Caco-2 (cell line): ENCODE measurements at regions of chr11 and their contacts with region 1.

Region 1: GRCh38 chr11:123413636-123414035 is 16.4 kb upstream of the GRAMD1B start:
- DNase-seq: no peak
- H3K4me3 ChIP-seq: no peak overlapping the region
- H3K4me3 Mint-ChIP-seq: no peak overlapping the region
- H3K27ac Mint-ChIP-seq: no peak overlapping the region
- H3K4me1 ChIP-seq: peaks cover 4% of the 10 kb centered on the region
- H3K4me1 Mint-ChIP-seq: peaks cover 7% of the 10 kb centered on the region
- H3K27me3 ChIP-seq: peaks cover 6% of the 10 kb centered on the region
- H3K27me3 Mint-ChIP-seq: peaks cover 8% of the 10 kb centered on the region
- CTCF ChIP-seq: no peak

Region 2: GRCh38 chr11:123434262-123434661 is 20.6 kb after region 1 on chr11:
- CTCF ChIA-PET with region 1: interaction called, 12 read pairs
- POLR2A ChIA-PET with region 1: no interaction called
- intact Hi-C with region 1: no loop called
- DNase-seq: peak; percentile 42 to 51
- H3K4me3 ChIP-seq: no peak overlapping the region
- H3K4me3 Mint-ChIP-seq: no peak overlapping the region
- H3K27ac Mint-ChIP-seq: no peak overlapping the region
- H3K4me1 ChIP-seq: peaks cover 7% of the 10 kb centered on the region
- H3K4me1 Mint-ChIP-seq: peaks cover 6% of the 10 kb centered on the region
- H3K27me3 ChIP-seq: no peaks in the 10 kb centered on the region; the same call in 1 of the 2 replicates
- H3K27me3 Mint-ChIP-seq: peaks cover 21% of the 10 kb centered on the region
- CTCF ChIP-seq: peak; percentile 37 to 46

Region 3: GRCh38 chr11:123509737-123510578 is 96.3 kb after region 1 on chr11:
- CTCF ChIA-PET with region 1: no interaction called
- POLR2A ChIA-PET with region 1: no interaction called
- intact Hi-C with region 1: no loop called
- DNase-seq: no peak
- H3K4me3 ChIP-seq: no peak overlapping the region
- H3K4me3 Mint-ChIP-seq: no peak overlapping the region
- H3K27ac Mint-ChIP-seq: no peak overlapping the region
- H3K4me1 ChIP-seq: no peaks in the 10 kb centered on the region
- H3K4me1 Mint-ChIP-seq: no peaks in the 10 kb centered on the region
- H3K27me3 ChIP-seq: no peaks in the 10 kb centered on the region; the same call in 1 of the 2 replicates
- H3K27me3 Mint-ChIP-seq: peaks cover 22% of the 10 kb centered on the region
- CTCF ChIP-seq: no peak